Gastrocnemius medialis (tissue), 4 donors: ENCODE measurements at regions of chr3 and their contacts with region 1.

Region 1: GRCh38 chr3:101978348-101978747 is 129.0 kb downstream of the NFKBIZ start:
- DNase-seq: no peak
- ATAC-seq: no peak
- H3K4me3 ChIP-seq: no peak overlapping the region
- H3K27ac ChIP-seq: no peak overlapping the region
- H3K4me1 ChIP-seq: peaks cover 0 to 13% of the 10 kb centered on the region in 2 donors
- H3K27me3 ChIP-seq: no peaks in the 10 kb centered on the region
- CTCF ChIP-seq: no peak
- POLR2A ChIP-seq: no peak

Region 2: GRCh38 chr3:101964861-101965260 is 13.5 kb before region 1 on chr3:
- in situ Hi-C with region 1: no loop called
- intact Hi-C with region 1: loop called (anchors 1 kb)
- DNase-seq: no peak
- ATAC-seq: no peak
- H3K4me3 ChIP-seq: no peak overlapping the region
- H3K27ac ChIP-seq: no peak overlapping the region
- H3K4me1 ChIP-seq: no peaks in the 10 kb centered on the region
- H3K27me3 ChIP-seq: no peaks in the 10 kb centered on the region
- CTCF ChIP-seq: no peak
- POLR2A ChIP-seq: no peak